Left colon (tissue), 2 donors: ENCODE measurements at regions of chr4 and their contacts with region 1.

Region 1: GRCh38 chr4:16196478-16197393 is 29.5 kb downstream of the TAPT1 start:
- DNase-seq: no peak
- ATAC-seq: peak; percentile 99

Region 2: DNA sequence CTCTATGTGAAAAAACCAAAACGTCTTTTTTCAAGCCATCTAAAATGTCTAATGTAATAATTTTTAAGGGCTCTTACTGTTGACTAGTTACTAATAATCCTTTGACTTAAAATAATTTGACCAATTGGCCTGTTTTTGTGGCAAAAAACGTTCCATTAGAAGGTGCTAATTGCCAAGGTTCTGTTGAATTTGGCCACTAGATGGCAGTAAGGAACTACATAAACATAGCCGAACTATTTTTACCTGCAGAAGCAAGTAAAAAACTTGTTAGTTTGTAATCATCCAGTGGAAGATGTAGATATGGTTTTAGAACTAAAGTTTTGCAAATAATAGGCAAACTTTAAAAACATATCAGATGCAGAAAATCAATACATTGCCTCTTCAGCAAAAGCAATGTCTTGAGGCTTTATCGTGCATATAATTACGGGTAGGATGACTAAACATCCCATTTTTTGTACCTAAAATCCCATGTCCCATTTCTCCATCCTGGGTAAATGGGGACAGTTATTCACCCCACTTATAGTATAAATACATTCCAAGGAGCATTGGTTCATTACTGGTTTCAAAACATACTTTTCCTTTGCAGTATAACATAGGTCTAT is 170.5 kb before region 1 on chr4:
- intact Hi-C with region 1: loop called in 1 of 2 experiments (anchors 10 kb)
- DNase-seq: no peak
- ATAC-seq: peak; percentile 50

Region 3: DNA sequence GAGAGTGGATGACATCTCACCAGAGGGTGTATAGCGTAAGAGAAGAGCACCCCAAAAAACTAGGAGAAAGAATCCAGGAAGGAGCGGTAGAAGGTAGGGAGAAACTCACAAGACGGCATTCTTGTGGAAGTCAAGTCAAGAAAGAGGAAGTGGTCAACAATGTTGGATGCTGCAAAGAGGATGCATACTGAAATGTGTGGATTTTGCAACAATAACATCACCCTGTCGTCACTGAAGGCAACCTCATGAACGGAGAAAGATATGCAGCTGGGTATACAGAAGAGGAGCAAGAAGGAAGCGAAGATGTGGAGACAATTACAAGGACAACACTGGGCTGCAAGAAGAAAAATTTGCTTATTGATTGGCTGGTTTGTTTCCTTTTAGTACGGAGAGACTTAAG is 41.0 kb after region 1 on chr4:
- intact Hi-C with region 1: loop called in 1 of 2 experiments (anchors 5 kb)
- DNase-seq: no peak
- ATAC-seq: no peak